MCF 10A (cell line): ENCODE measurements at regions of chr2 and their contacts with region 1.

Region 1: DNA sequence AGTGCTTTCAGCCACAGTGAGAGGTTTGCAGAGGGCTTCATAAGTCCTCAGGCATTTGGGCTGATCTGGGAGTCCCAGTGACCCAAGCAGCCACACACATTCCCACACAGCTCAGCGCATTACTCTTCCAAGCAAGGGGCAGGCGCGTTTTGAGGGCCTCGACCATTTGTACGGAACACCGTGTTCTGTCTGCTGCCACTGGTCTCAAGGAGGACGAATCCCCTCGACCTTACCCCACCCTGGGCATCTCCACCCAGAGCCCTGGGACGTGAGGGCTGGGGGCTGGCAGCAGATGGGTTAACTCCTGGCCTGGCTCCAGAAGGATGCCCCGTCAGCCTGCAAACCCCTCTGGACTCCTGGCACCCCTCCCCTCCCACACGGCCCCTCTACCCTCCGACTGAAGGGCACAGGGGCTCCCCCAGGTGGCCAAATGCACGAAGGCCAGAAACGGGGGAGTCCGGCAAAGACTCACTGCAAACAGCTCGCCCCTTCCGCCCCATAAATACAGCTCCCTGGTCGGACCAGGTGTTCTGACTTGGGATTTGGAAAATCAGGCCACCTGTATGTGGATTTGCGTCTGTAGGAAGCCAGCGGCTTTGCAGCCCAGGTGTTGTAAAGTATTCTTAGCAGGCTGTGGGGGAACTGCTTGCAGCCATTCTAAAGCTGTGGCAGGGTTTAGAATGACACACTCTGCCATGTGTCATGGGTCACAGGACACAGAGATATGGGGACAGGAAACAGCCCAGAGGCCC is 33.6 kb upstream of the PTMA start:
- DNase-seq: peak; percentile 67
- H3K4me3 Mint-ChIP-seq: no peak overlapping the region
- H3K27ac Mint-ChIP-seq: no peak overlapping the region
- H3K4me1 Mint-ChIP-seq: peaks cover 19% of the 10 kb centered on the region
- H3K27me3 Mint-ChIP-seq: no peaks in the 10 kb centered on the region
- CTCF ChIP-seq: peak; percentile 83

Region 2: GRCh38 chr2:231604685-231605606 is 69.8 kb before region 1 on chr2:
- CTCF ChIA-PET with region 1: interaction called, 22 read pairs
- POLR2A ChIA-PET with region 1: interaction called, 73 read pairs
- intact Hi-C with region 1: no loop called
- DNase-seq: peak; percentile 96
- H3K4me3 Mint-ChIP-seq: peak overlapping the region; percentile 60
- H3K27ac Mint-ChIP-seq: peak overlapping the region; percentile 92
- H3K4me1 Mint-ChIP-seq: peaks cover 11% of the 10 kb centered on the region
- H3K27me3 Mint-ChIP-seq: no peaks in the 10 kb centered on the region
- CTCF ChIP-seq: no peak

Region 3: GRCh38 chr2:231642631-231643494 is 31.9 kb before region 1 on chr2:
- CTCF ChIA-PET with region 1: interaction called, 123 read pairs
- POLR2A ChIA-PET with region 1: interaction called, 11 read pairs
- intact Hi-C with region 1: loop called (anchors 1 kb)
- DNase-seq: peak; percentile 99
- H3K4me3 Mint-ChIP-seq: peak overlapping the region; percentile 59
- H3K27ac Mint-ChIP-seq: peak overlapping the region; percentile 97
- H3K4me1 Mint-ChIP-seq: peaks cover 30% of the 10 kb centered on the region
- H3K27me3 Mint-ChIP-seq: no peaks in the 10 kb centered on the region
- CTCF ChIP-seq: no peak

Region 4: GRCh38 chr2:231662028-231662810 is 12.5 kb before region 1 on chr2:
- CTCF ChIA-PET with region 1: interaction called, 34 read pairs
- POLR2A ChIA-PET with region 1: interaction called, 3 read pairs
- intact Hi-C with region 1: no loop called
- DNase-seq: peak; percentile 97
- H3K4me3 Mint-ChIP-seq: peak overlapping the region; percentile 64
- H3K27ac Mint-ChIP-seq: peak overlapping the region; percentile 57
- H3K4me1 Mint-ChIP-seq: no peaks in the 10 kb centered on the region
- H3K27me3 Mint-ChIP-seq: no peaks in the 10 kb centered on the region
- CTCF ChIP-seq: no peak

Region 5: DNA sequence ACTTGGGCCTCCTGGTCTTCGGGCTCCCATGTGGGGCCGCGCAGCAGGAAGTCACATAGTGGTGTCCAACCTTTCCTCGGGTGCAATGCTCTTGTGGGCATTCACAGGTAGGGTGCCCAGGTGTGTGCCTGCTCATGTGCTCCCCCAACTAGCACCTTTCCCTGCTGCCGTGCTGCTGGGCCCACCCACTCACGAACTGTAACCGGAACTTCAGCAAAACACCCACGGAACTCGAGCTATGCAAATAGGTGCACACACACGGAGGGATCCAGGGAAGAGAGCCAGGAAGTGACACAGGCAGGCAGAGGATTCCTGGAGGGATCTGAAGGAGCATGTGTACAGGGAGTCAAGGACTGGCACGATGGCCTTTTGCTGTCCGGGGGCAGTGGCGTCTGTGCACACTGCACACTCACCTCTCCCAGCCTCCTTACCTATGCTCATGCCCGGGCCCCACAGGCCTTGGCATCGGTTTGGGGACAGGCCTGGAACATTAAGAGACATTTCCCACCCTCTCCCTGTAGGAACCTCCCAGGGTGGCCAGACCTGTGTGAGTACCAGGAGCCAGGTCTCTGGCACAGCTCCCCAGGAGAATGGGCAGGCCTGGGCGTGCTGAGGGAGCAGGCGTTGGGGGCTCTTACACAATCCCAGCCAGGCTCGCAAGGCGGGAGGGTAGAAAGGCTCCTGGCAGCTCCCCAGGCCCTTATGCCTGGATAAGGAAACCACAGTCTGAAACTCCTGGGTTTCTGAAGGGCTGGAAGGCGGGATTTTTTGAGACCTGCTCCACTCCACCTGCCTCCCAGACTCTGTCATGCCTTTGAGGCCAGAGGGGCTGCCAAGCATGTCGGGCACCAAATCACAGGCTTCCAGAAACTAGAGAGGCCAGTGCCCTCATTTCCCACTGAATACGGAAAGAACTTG is 27.0 kb after region 1 on chr2:
- CTCF ChIA-PET with region 1: interaction called, 142 read pairs
- POLR2A ChIA-PET with region 1: interaction called, 14 read pairs
- intact Hi-C with region 1: no loop called
- DNase-seq: peak; percentile 98
- H3K4me3 Mint-ChIP-seq: peak overlapping the region; percentile 58
- H3K27ac Mint-ChIP-seq: peak overlapping the region; percentile 71
- H3K4me1 Mint-ChIP-seq: peaks cover 11% of the 10 kb centered on the region
- H3K27me3 Mint-ChIP-seq: no peaks in the 10 kb centered on the region
- CTCF ChIP-seq: no peak

Region 6: GRCh38 chr2:231786177-231786916 is 111.6 kb after region 1 on chr2 and contains the start of gene COPS7B:
- CTCF ChIA-PET with region 1: interaction called, 3 read pairs
- POLR2A ChIA-PET with region 1: interaction called, 4 read pairs
- intact Hi-C with region 1: loop called (anchors 2 kb)
- DNase-seq: peak; percentile 69
- H3K4me3 Mint-ChIP-seq: peak within 1 kb of the TSS; percentile 85
- H3K27ac Mint-ChIP-seq: peak within 1 kb of the TSS; percentile 63
- H3K4me1 Mint-ChIP-seq: peaks cover 42% of the 10 kb centered on the region
- H3K27me3 Mint-ChIP-seq: no peaks in the 10 kb centered on the region
- CTCF ChIP-seq: peak; percentile 64
- total RNA-seq, gene COPS7B: 41.5 and 49.9 TPM in 2 replicates